Naive thymus-derived CD4-positive, alpha-beta T cell (primary cell): ENCODE measurements at regions of chr10 and their contacts with region 1.

Region 1: DNA sequence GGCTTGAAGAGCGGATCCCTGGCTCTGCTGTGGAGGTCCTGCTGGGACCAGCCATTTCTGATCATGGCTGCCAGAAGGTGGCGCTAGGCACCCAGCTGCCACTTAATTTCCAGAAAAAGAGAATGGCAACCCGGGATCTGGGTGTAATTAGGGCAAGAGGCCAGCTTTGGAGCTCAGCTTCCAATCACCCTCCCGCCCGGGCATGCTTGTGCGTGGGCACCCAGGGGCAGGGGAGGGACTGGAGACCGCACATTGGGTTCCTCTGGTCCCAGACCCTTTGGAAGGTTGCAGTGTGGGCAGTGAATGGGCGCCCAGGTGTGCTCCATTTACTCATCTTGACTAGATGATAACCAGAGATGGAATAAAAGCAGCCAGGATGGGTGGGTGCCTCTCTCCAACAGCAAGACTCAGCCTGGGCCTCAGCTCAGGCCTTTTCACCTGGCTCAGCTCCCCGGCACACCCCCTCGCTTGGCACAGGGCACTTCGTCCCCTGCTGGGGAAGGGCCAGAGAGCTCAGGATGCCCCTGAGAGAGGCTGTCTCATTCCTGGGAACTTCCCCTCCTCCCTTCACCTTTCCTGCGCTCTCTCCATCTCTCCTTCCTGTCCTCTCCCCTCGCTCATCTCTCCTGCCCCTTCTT is 14.7 kb downstream of the FAM241B start:
- DNase-seq: peak in 1 of 9 donors; percentile 41
- ATAC-seq: no peak
- H3K4me3 ChIP-seq: no peak overlapping the region
- H3K4me3 Mint-ChIP-seq: no peak overlapping the region
- H3K27ac ChIP-seq: no peak overlapping the region
- H3K27ac Mint-ChIP-seq: no peak overlapping the region
- H3K4me1 ChIP-seq: no peaks in the 10 kb centered on the region
- H3K4me1 Mint-ChIP-seq: no peaks in the 10 kb centered on the region
- H3K27me3 ChIP-seq: no peaks in the 10 kb centered on the region
- H3K27me3 Mint-ChIP-seq: peaks cover 0 to 11% (median 0%) of the 10 kb centered on the region in 5 donors

Region 2: GRCh38 chr10:69492091-69492750 is 152.6 kb before region 1 on chr10:
- CTCF ChIA-PET with region 1: no interaction called
- POLR2A ChIA-PET with region 1: no interaction called
- intact Hi-C with region 1: no loop called
- DNase-seq: no peak
- ATAC-seq: no peak
- H3K4me3 ChIP-seq: no peak overlapping the region
- H3K4me3 Mint-ChIP-seq: no peak overlapping the region
- H3K27ac ChIP-seq: no peak overlapping the region
- H3K27ac Mint-ChIP-seq: no peak overlapping the region
- H3K4me1 ChIP-seq: no peaks in the 10 kb centered on the region
- H3K4me1 Mint-ChIP-seq: no peaks in the 10 kb centered on the region
- H3K27me3 ChIP-seq: no peaks in the 10 kb centered on the region
- H3K27me3 Mint-ChIP-seq: no peaks in the 10 kb centered on the region

Region 3: GRCh38 chr10:69549959-69550358 is 94.8 kb before region 1 on chr10:
- CTCF ChIA-PET with region 1: no interaction called
- POLR2A ChIA-PET with region 1: no interaction called
- intact Hi-C with region 1: no loop called
- DNase-seq: no peak
- ATAC-seq: no peak
- H3K4me3 ChIP-seq: no peak overlapping the region
- H3K4me3 Mint-ChIP-seq: no peak overlapping the region
- H3K27ac ChIP-seq: no peak overlapping the region
- H3K27ac Mint-ChIP-seq: no peak overlapping the region
- H3K4me1 ChIP-seq: no peaks in the 10 kb centered on the region
- H3K4me1 Mint-ChIP-seq: no peaks in the 10 kb centered on the region
- H3K27me3 ChIP-seq: no peaks in the 10 kb centered on the region
- H3K27me3 Mint-ChIP-seq: peaks cover 8 to 41% (median 21%) of the 10 kb centered on the region in 5 donors

Region 4: DNA sequence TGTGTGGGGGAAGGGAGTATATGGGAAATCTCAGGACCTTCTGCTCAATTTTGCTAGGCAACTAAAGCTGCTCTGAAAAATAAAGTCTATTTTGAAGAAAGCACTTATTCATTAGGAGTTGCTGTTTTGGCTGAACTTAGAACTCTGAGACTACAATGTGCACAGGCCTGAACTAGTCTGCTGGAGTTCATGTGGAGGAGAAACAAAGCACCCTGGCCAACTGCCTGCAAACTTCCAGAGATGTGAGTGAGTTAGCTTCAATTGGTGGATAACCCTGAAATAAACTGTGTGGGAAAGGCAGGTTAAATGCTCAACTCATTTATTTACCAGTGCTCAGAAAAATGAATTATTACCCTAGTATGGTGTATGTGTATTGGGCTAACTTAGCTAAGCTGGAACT is 32.0 kb before region 1 on chr10:
- CTCF ChIA-PET with region 1: no interaction called
- POLR2A ChIA-PET with region 1: no interaction called
- intact Hi-C with region 1: no loop called
- DNase-seq: no peak
- ATAC-seq: no peak
- H3K4me3 ChIP-seq: no peak overlapping the region
- H3K4me3 Mint-ChIP-seq: no peak overlapping the region
- H3K27ac ChIP-seq: no peak overlapping the region
- H3K27ac Mint-ChIP-seq: no peak overlapping the region
- H3K4me1 ChIP-seq: no peaks in the 10 kb centered on the region
- H3K4me1 Mint-ChIP-seq: no peaks in the 10 kb centered on the region
- H3K27me3 ChIP-seq: no peaks in the 10 kb centered on the region
- H3K27me3 Mint-ChIP-seq: peaks cover 0 to 43% (median 0%) of the 10 kb centered on the region in 5 donors

Region 5: DNA sequence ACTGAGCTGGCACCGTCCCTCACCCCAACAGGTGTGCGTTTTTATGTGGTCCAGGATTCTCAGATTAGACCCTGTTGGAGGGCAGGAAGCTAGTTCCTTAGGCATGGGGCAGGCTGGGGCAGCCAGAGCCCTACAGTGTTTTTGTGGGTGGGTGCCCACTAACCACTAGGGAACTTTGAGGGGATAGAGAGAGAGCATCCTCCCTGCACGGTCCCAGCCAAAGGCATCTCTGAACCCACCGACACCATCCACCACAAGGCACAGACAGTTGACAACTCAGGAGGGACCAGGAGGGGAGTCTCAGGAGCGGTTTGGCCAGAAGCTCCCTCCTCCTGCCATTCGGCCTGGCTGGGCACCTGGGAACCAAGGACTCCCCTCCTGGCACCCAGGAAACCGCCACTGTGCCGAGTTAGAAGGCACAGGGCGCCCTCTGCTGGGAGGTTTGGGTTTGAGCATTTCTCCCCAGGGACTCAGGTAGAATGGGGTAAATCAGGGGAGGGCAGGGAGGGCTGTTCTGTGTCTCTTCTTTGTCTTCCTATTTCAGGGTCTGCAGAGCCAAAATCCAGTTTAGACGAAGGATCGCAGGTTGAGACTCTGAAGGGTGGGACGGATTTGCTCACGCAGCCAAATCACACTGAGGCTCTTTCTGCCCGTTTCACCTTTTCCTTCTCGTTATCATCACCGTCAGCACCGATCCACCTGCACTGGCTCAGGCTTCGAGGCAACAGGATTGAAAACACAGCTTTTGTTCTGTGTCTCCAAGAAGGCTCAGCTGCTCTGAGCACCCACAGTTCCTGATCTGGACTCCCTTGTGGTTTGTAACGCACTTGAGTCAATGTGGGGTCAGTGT is 72.2 kb after region 1 on chr10:
- CTCF ChIA-PET with region 1: no interaction called
- POLR2A ChIA-PET with region 1: no interaction called
- intact Hi-C with region 1: loop called (anchors 1 kb)
- DNase-seq: peak in 7 of 9 donors; percentile 20 to 65 (median 33)
- ATAC-seq: peak; percentile 50
- H3K4me3 ChIP-seq: no peak overlapping the region
- H3K4me3 Mint-ChIP-seq: no peak overlapping the region
- H3K27ac ChIP-seq: no peak overlapping the region
- H3K27ac Mint-ChIP-seq: no peak overlapping the region
- H3K4me1 ChIP-seq: no peaks in the 10 kb centered on the region
- H3K4me1 Mint-ChIP-seq: no peaks in the 10 kb centered on the region
- H3K27me3 ChIP-seq: no peaks in the 10 kb centered on the region
- H3K27me3 Mint-ChIP-seq: peaks cover 0 to 18% (median 10%) of the 10 kb centered on the region in 5 donors

Region 6: DNA sequence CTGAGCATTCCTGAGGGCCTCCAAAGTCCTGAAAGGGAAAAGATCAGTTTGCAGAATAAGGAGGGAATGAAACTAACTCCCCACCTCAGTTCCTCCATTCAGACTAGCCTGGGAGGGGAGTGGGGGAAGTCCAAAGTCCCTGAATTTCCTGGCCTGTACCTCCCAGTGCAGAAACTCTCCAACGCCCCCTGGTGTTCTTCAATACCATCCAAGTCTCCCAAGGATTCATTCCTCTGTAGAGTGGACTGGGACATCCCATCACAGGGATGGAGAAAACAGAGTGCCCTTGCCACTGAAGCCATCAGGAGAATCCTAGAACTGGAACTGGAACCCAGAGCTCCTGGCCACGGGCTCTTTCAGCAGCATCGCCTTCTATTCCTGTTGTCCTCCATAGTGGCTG is 155.3 kb after region 1 on chr10:
- CTCF ChIA-PET with region 1: no interaction called
- POLR2A ChIA-PET with region 1: no interaction called
- intact Hi-C with region 1: loop called in 1 of 2 experiments (anchors 2 kb)
- DNase-seq: no peak
- ATAC-seq: no peak
- H3K4me3 ChIP-seq: no peak overlapping the region
- H3K4me3 Mint-ChIP-seq: peak overlapping the region in 1 of 10 donors; percentile 44
- H3K27ac ChIP-seq: no peak overlapping the region
- H3K27ac Mint-ChIP-seq: no peak overlapping the region
- H3K4me1 ChIP-seq: no peaks in the 10 kb centered on the region
- H3K4me1 Mint-ChIP-seq: peaks cover 3 to 15% (median 12%) of the 10 kb centered on the region in 7 donors
- H3K27me3 ChIP-seq: no peaks in the 10 kb centered on the region
- H3K27me3 Mint-ChIP-seq: peaks cover 46 to 61% (median 55%) of the 10 kb centered on the region in 5 donors

Region 7: DNA sequence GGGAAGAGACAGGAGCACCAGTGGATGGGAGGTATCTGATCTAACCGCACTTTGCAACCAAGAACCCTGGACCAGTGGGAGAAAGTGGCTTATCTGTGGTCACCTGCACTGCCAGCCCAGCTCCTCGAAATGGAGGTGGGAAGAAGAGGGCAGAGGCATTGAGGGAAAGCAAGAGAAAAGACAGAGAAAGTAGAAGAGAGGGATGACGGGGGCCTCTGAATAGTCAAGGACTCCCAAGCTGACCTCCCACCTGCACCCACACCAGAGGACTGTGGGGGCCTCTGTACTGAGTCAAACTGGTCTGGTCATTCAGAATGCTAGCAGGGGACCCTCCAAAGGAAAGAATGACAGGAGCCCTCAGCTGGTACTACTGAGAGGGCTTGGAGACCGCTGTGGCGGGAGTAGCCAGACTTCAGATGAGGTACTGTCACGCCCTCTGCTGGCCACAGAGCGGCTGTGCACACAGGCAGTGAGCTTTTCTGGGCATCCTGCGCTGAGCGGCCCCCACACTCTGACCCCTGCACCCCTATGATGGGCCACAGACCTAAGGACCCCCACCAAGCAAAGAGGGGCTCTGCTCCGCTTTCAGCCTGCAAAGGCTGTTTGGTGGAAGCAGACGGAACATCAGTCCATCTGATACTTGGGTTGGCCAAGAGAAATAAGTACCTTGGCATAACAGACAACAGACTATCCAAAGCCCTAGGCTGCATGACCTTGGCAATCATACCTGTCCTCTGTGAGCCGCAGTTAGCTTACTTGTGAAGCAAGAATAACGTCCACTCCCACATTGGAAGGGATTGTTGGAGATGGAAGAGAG is 269.8 kb after region 1 on chr10:
- CTCF ChIA-PET with region 1: no interaction called
- POLR2A ChIA-PET with region 1: no interaction called
- intact Hi-C with region 1: loop called in 1 of 2 experiments (anchors 1 kb)
- DNase-seq: peak in 8 of 9 donors; percentile 22 to 39 (median 27)
- ATAC-seq: peak; percentile 73
- H3K4me3 ChIP-seq: no peak overlapping the region
- H3K4me3 Mint-ChIP-seq: no peak overlapping the region
- H3K27ac ChIP-seq: no peak overlapping the region
- H3K27ac Mint-ChIP-seq: no peak overlapping the region
- H3K4me1 ChIP-seq: no peaks in the 10 kb centered on the region
- H3K4me1 Mint-ChIP-seq: peaks cover 0 to 5% (median 0%) of the 10 kb centered on the region in 7 donors
- H3K27me3 ChIP-seq: no peaks in the 10 kb centered on the region
- H3K27me3 Mint-ChIP-seq: peaks cover 0 to 13% (median 7%) of the 10 kb centered on the region in 5 donors